Activated CD4-positive, alpha-beta memory T cell treated with anti-CD3 and anti-CD28 coated beads for 36 hours (primary cell): ENCODE measurements at regions of chr5 and their contacts with region 1.

Region 1: GRCh38 chr5:82158755-82159413 is 119.3 kb downstream of the RPS23 start:
- DNase-seq: no peak
- H3K4me3 Mint-ChIP-seq: no peak overlapping the region
- H3K27ac Mint-ChIP-seq: no peak overlapping the region
- H3K4me1 Mint-ChIP-seq: peaks cover 5% of the 10 kb centered on the region
- H3K27me3 Mint-ChIP-seq: no peaks in the 10 kb centered on the region

Region 2: DNA sequence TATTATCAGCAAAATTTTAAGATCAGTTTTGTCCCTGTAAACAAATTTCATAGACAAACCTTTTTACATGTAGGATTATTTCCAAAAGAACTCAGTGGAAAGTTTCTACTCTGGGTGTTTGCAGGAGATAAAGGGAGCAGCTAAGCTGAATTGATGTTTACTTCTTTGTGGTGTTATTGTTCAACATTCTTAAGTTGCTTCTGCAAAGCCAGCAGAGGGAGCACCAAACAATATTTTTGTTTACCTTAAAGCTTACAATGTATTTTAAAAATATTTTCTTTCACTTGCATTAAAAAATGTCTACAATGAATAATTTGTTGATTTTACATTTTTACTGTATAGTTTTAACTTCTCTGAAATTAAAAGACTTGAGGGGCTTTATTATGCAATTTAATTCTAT is 51.6 kb before region 1 on chr5:
- CTCF ChIA-PET with region 1: no interaction called
- POLR2A ChIA-PET with region 1: no interaction called
- intact Hi-C with region 1: loop called (anchors 5 kb)
- DNase-seq: no peak
- H3K4me3 Mint-ChIP-seq: no peak overlapping the region
- H3K27ac Mint-ChIP-seq: no peak overlapping the region
- H3K4me1 Mint-ChIP-seq: peaks cover 8% of the 10 kb centered on the region
- H3K27me3 Mint-ChIP-seq: no peaks in the 10 kb centered on the region

Region 3: DNA sequence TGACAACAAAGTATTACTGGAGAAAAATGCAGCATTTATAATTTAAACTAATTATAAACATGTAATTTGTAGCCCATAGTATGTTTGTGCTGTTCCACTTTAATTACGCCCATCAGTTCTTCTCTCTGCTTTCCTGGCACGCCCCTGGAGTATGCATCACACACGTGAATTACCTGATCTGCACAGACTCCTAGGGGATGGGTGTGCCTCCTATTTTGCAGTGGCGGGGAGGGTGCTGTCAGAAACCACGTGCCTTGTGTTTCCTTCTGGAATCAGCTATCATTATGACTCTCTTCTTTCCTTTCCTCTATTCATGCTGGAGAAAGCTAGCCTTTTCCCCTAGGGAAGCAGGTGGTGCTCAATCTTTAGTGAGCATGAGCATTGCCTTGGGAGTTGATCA is 76.0 kb after region 1 on chr5:
- CTCF ChIA-PET with region 1: no interaction called
- POLR2A ChIA-PET with region 1: no interaction called
- intact Hi-C with region 1: no loop called
- DNase-seq: no peak
- H3K4me3 Mint-ChIP-seq: no peak overlapping the region
- H3K27ac Mint-ChIP-seq: no peak overlapping the region
- H3K4me1 Mint-ChIP-seq: no peaks in the 10 kb centered on the region
- H3K27me3 Mint-ChIP-seq: no peaks in the 10 kb centered on the region